Caco-2 (cell line): ENCODE measurements at regions of chr3 and their contacts with region 1.

Region 1: GRCh38 chr3:73508330-73508954 is 116.3 kb downstream of the PDZRN3 start:
- DNase-seq: peak; percentile 57 to 71
- H3K4me3 ChIP-seq: no peak overlapping the region
- H3K4me3 Mint-ChIP-seq: no peak overlapping the region
- H3K27ac Mint-ChIP-seq: no peak overlapping the region
- H3K4me1 ChIP-seq: peaks cover 44% of the 10 kb centered on the region
- H3K4me1 Mint-ChIP-seq: peaks cover 3% of the 10 kb centered on the region
- H3K27me3 ChIP-seq: no peaks in the 10 kb centered on the region
- H3K27me3 Mint-ChIP-seq: no peaks in the 10 kb centered on the region
- CTCF ChIP-seq: peak; percentile 68 to 78

Region 2: DNA sequence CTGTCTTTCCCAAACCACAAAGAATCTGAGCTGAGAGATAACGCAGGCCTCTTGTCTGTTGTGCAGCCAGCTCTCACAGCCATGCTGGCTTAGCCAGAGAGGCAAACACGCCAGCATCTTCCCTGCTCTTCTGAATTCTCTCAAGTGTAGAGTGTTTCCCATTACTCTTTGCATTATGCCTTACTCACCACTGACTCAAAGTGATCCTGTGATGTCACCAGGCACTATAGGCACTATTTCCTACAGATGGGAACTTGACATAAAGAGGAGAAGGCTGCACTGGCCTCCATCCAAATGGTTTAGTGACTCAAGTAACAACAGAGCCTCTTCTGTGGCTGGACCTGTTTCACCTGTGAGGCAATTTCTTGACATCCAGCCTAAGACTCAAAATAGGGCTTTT is 71.9 kb after region 1 on chr3:
- CTCF ChIA-PET with region 1: no interaction called
- POLR2A ChIA-PET with region 1: no interaction called
- intact Hi-C with region 1: no loop called
- DNase-seq: no peak
- H3K4me3 ChIP-seq: no peak overlapping the region
- H3K4me3 Mint-ChIP-seq: no peak overlapping the region
- H3K27ac Mint-ChIP-seq: no peak overlapping the region
- H3K4me1 ChIP-seq: peaks cover 12% of the 10 kb centered on the region
- H3K4me1 Mint-ChIP-seq: peaks cover 9% of the 10 kb centered on the region
- H3K27me3 ChIP-seq: no peaks in the 10 kb centered on the region
- H3K27me3 Mint-ChIP-seq: no peaks in the 10 kb centered on the region
- CTCF ChIP-seq: no peak

Region 3: GRCh38 chr3:73624821-73625665 is 116.6 kb after region 1 on chr3 and contains the start of gene PDZRN3:
- CTCF ChIA-PET with region 1: interaction called, 8 read pairs
- POLR2A ChIA-PET with region 1: interaction called, 3 read pairs
- intact Hi-C with region 1: loop called (anchors 1 kb)
- DNase-seq: peak; percentile 67 to 69
- H3K4me3 ChIP-seq: peak within 1 kb of the TSS; percentile 68
- H3K4me3 Mint-ChIP-seq: peak within 1 kb of the TSS; percentile 86
- H3K27ac Mint-ChIP-seq: peak within 1 kb of the TSS; percentile 79
- H3K4me1 ChIP-seq: peaks cover 26% of the 10 kb centered on the region
- H3K4me1 Mint-ChIP-seq: peaks cover 16% of the 10 kb centered on the region
- H3K27me3 ChIP-seq: no peaks in the 10 kb centered on the region
- H3K27me3 Mint-ChIP-seq: no peaks in the 10 kb centered on the region
- CTCF ChIP-seq: no peak
- total RNA-seq, gene PDZRN3: 12.5 and 13.6 TPM in 2 replicates

Region 4: DNA sequence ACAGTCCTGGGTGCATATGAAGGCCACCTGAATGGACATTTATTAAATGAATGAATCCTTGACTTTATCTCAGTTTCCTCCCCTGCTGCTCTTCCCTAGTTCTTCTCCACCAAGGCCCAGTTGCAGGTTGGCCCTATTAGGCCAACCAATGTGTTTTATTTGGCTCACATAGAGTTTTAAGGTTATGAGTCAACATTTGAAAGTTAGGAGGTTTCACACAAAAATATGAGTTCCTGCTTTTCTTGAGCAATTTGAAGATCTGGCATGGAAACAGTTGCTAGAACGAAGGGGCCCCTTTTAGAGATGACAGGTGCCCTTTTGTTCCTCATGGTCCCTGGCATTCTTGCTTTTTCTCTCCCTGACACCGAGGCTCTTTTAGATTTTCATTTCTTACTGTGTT is 199.3 kb after region 1 on chr3:
- CTCF ChIA-PET with region 1: no interaction called
- POLR2A ChIA-PET with region 1: no interaction called
- intact Hi-C with region 1: loop called (anchors 5 kb)
- DNase-seq: no peak
- H3K4me3 ChIP-seq: no peak overlapping the region
- H3K4me3 Mint-ChIP-seq: peak overlapping the region; percentile 17
- H3K27ac Mint-ChIP-seq: peak overlapping the region; percentile 31
- H3K4me1 ChIP-seq: peaks cover 47% of the 10 kb centered on the region
- H3K4me1 Mint-ChIP-seq: peaks cover 20% of the 10 kb centered on the region
- H3K27me3 ChIP-seq: no peaks in the 10 kb centered on the region
- H3K27me3 Mint-ChIP-seq: no peaks in the 10 kb centered on the region
- CTCF ChIP-seq: no peak

Region 5: GRCh38 chr3:73766599-73767381 is 258.3 kb after region 1 on chr3:
- CTCF ChIA-PET with region 1: no interaction called
- POLR2A ChIA-PET with region 1: no interaction called
- intact Hi-C with region 1: loop called (anchors 1 kb)
- DNase-seq: no peak
- H3K4me3 ChIP-seq: no peak overlapping the region
- H3K4me3 Mint-ChIP-seq: no peak overlapping the region
- H3K27ac Mint-ChIP-seq: no peak overlapping the region
- H3K4me1 ChIP-seq: no peaks in the 10 kb centered on the region
- H3K4me1 Mint-ChIP-seq: peaks cover 6% of the 10 kb centered on the region
- H3K27me3 ChIP-seq: no peaks in the 10 kb centered on the region
- H3K27me3 Mint-ChIP-seq: peaks cover 4% of the 10 kb centered on the region
- CTCF ChIP-seq: no peak

Region 6: GRCh38 chr3:73848173-73848906 is 339.9 kb after region 1 on chr3:
- CTCF ChIA-PET with region 1: interaction called, 5 read pairs
- POLR2A ChIA-PET with region 1: no interaction called
- intact Hi-C with region 1: loop called (anchors 1 kb)
- DNase-seq: peak in 1 of 2 experiments; percentile 8
- H3K4me3 ChIP-seq: no peak overlapping the region
- H3K4me3 Mint-ChIP-seq: no peak overlapping the region
- H3K27ac Mint-ChIP-seq: no peak overlapping the region
- H3K4me1 ChIP-seq: peaks cover 7% of the 10 kb centered on the region; the same call in 1 of the 2 replicates
- H3K4me1 Mint-ChIP-seq: peaks cover 8% of the 10 kb centered on the region
- H3K27me3 ChIP-seq: no peaks in the 10 kb centered on the region; the same call in 1 of the 2 replicates
- H3K27me3 Mint-ChIP-seq: peaks cover 8% of the 10 kb centered on the region
- CTCF ChIP-seq: peak; percentile 63 to 69